ENCODE measurements at regions of chr9 and their contacts with region 1.

Region 1: DNA sequence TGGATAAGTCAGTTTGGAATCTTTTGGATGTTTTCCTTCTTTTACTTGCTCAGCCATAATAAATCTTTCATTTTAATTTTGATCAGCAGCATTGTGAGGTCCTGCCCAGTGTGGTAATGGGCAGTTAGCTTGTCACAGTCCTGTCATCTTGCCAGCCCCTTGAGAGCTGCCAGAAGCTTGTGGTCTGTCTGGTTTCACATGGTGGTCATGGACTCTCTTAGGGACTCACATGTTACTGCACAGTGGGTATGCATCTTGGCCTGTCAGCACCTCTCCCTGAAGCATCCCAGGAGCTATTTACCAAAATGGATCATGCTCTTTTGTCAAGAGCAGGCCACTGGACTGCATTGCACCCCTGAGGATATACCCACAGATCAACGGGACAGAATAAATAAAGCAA is 60.3 kb downstream of the DAPK1 start:
- DNase-seq: no peak
- CTCF ChIP-seq: no peak

Region 2: DNA sequence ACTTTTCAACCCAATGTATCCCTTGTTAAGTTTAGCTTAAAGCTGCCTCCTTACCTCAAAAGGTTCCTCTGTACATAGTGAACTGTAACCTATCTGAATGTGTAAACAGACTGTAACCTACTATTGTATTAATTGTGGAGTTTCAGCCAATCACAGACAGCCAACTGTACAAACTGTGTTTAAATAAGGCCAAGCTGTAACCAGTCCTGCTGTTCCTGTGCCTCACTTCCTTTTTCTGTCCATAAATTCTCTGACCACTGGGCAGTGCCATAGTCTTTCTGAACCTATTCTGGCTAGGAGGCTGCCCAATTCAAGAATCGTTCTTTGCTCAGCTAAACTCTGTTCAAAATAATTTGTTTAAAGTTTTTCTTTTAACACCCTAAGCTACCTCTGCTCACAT is 135.0 kb before region 1 on chr9:
- CTCF ChIA-PET with region 1: no interaction called
- POLR2A ChIA-PET with region 1: no interaction called
- DNase-seq: no peak
- CTCF ChIP-seq: no peak

Region 3: GRCh38 chr9:87535817-87536539 is 22.0 kb before region 1 on chr9:
- CTCF ChIA-PET with region 1: interaction called, 14 read pairs
- POLR2A ChIA-PET with region 1: interaction called, 16 read pairs
- DNase-seq: peak; percentile 56
- CTCF ChIP-seq: no peak

Region 4: GRCh38 chr9:87547667-87548066 is 10.3 kb before region 1 on chr9:
- CTCF ChIA-PET with region 1: interaction called, 11 read pairs
- POLR2A ChIA-PET with region 1: no interaction called
- DNase-seq: no peak
- CTCF ChIP-seq: no peak

Region 5: DNA sequence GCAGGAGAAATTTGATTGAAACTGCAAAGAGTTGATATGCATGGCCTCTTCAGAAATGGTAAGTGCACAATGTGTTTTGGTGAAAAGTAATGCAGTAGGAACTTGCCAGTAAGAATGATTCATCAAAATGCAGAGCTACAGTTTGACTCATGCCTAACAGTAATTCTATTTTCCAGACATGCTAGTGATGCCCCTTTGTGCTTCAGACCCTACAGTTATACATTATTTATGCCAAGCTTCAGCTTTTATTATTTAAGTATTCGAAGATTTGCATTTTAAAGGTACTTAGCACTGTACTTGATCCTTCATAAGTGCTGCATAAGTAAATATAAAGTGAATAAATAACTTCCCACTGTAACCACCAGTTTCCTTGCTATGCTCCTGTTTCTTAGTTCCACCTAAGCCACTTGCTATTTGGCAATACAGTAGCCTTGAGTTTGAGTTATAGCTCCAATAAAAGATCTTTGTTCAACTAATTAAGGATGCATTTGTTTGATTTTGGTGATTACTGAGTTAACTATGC is 321.1 kb after region 1 on chr9:
- CTCF ChIA-PET with region 1: no interaction called
- POLR2A ChIA-PET with region 1: no interaction called
- DNase-seq: no peak
- CTCF ChIP-seq: no peak

Region 6: DNA sequence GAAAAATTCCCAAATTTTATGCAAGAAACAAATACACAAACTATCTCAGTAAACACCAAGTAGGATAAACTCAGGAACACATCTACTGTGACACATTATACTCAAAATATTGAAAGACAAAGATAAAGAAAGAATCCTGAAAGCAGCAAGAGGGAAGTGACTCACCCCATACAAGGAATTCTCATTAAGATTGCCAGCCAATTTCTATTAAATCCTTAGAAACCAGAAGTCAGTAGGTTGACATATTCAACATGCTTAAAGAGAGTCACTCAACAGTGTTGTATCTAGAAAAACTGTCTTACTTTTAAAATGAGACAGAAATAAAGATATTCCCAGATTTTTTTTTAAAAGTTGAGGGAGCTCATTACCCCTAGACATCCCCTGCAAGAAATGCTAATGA is 340.2 kb after region 1 on chr9:
- CTCF ChIA-PET with region 1: no interaction called
- POLR2A ChIA-PET with region 1: no interaction called
- DNase-seq: no peak
- CTCF ChIP-seq: no peak